ENCODE measurements at regions of chr1 and their contacts with region 1.

Region 1: DNA sequence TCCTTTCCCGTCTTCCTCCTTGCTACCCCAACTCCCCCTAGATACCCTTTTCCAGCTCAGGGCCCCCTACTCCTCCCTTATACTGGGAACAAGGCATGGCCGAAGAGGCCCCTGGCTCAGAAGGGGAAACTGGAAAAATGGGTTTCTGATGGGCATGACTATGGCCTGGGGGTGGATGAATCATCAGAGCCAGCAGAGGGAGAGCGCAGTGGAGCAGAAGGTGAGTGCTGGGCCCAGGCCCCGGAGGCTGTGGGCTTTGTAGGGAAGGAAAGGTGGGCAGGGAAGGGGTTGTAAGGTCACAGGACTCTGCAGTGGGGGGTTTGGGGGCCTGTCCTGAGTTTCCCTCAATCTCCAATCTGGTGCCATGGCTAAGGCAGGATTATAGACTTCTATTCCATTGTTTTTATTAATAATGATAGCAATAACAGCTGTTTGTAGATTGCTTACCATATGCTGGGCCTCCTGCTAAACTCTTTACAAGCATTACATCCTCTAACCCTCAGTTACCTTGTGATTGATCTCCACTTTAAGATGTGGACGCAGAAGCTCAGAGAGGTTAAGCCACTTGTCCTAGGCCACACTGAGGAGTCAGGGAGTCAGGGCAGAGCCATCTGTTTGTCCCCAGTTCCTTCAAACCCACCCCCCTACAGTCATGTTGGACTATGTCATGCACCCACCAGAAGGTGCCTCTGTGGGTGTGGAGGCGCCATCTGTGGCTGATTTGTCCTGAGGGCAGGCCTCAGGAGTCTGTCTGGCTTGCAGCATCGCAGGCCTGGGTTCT is 36.2 kb upstream of the ZNF362 start:
- DNase-seq: no peak
- ATAC-seq: peak in 4 of 8 donors; percentile 30 to 46 (median 44)
- H3K4me3 ChIP-seq: no peak overlapping the region
- H3K27ac ChIP-seq: peak overlapping the region in 2 of 10 donors; percentile 2 to 15
- H3K4me1 ChIP-seq: peaks cover 0 to 25% (median 6%) of the 10 kb centered on the region in 9 donors
- H3K27me3 ChIP-seq: no peaks in the 10 kb centered on the region
- CTCF ChIP-seq: no peak

Region 2: DNA sequence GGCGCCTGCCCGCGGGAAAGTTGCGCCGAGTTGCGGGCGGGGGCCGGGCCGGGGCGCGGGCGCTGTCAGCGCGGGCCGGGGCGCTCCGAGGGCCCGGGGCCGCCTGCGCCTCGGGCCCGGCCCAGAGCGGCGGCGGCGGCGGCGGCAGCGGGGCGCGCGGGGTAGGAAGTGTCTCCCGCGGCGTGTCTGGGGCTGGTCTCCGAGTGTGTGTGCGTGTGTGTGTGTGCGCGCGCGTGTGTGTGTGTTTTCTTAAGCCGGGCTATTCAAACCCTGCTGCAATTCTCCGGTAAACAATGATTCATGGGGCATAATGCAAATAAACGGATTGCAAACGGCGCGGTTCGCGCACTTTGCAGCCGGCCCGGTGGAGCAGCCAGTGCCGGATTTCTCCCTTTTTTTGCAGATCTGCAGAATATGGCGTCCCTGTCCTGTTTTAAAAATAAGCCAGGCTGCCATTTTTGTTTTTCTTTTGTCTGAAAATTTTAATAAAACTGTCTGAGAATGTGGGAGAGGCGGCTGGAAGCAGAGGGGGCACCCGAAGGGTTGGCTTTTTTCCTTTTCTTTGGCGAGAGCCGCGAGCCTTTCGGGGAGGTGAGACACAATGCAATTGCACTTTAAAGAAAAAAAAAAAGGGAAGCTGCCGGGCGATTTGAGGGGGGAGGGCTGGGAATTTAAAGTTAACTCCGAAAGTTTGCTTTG is 36.8 kb after region 1 on chr1:
- intact Hi-C with region 1: loop called in 2 of 10 experiments (anchors 5 kb)
- DNase-seq: peak; percentile 53 to 60
- ATAC-seq: peak; percentile 32 to 56 (median 40)
- H3K4me3 ChIP-seq: peak overlapping the region; percentile 61 to 86 (median 75)
- H3K27ac ChIP-seq: peak overlapping the region; percentile 79 to 94 (median 88)
- H3K4me1 ChIP-seq: peaks cover 35 to 56% (median 53%) of the 10 kb centered on the region in 9 donors
- H3K27me3 ChIP-seq: no peaks in the 10 kb centered on the region
- CTCF ChIP-seq: no peak

Region 3: GRCh38 chr1:33472349-33472980 is 252.4 kb after region 1 on chr1 and contains the start of gene ZSCAN20:
- intact Hi-C with region 1: loop called in 5 of 10 experiments (anchors 2 to 10 kb)
- DNase-seq: peak; percentile 98 to 99
- ATAC-seq: peak; percentile 89 to 97 (median 94)
- H3K4me3 ChIP-seq: peak within 1 kb of the TSS; percentile 19 to 77 (median 64)
- H3K27ac ChIP-seq: peak within 1 kb of the TSS; percentile 59 to 92 (median 84)
- H3K4me1 ChIP-seq: peaks cover 3 to 65% (median 41%) of the 10 kb centered on the region in 9 donors
- H3K27me3 ChIP-seq: no peaks in the 10 kb centered on the region
- CTCF ChIP-seq: no peak
- total RNA-seq, gene ZSCAN20: 3.4 to 9.3 (median 5.8) TPM